IMR-90 (cell line): ENCODE measurements at regions of chr9 and their contacts with region 1.

Region 1: GRCh38 chr9:77149879-77150278 is 27.5 kb upstream of the VPS13A start:
- DNase-seq: no peak
- ATAC-seq: no peak
- H3K4me3 ChIP-seq: no peak overlapping the region
- H3K27ac ChIP-seq: no peak overlapping the region
- H3K4me1 ChIP-seq: no peaks in the 10 kb centered on the region
- H3K27me3 ChIP-seq: peaks cover 3% of the 10 kb centered on the region; the same call in 1 of the 2 replicates
- CTCF ChIP-seq: no peak
- POLR2A ChIP-seq: no peak
- RAD21 ChIP-seq: no peak

Region 2: DNA sequence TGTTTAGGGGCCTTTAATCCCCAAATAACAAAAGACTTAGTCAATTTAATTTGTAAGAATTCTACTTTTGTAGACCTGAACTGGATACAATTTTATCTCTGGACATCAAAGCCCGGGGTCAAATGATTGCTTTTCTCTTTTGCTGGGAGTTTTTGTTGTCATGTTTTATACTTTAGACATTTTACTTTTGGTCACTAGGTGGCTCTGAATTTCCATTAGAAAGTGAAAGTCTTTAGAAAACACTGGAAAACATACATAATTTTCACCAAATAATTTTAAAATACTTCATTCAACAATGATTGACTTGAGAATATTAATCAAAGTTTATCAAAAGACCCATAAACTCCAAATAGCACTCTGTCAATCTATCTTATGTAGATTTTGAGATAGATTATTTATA is 388.4 kb before region 1 on chr9:
- CTCF ChIA-PET with region 1: interaction called, 3 read pairs
- POLR2A ChIA-PET with region 1: no interaction called
- dilution Hi-C with region 1: no loop called
- in situ Hi-C with region 1: no loop called
- intact Hi-C with region 1: loop called (anchors 1 kb)
- DNase-seq: peak; percentile 7
- ATAC-seq: no peak; the same call in 1 of the 2 replicates
- H3K4me3 ChIP-seq: no peak overlapping the region
- H3K27ac ChIP-seq: no peak overlapping the region
- H3K4me1 ChIP-seq: no peaks in the 10 kb centered on the region
- H3K27me3 ChIP-seq: peaks cover 5% of the 10 kb centered on the region
- CTCF ChIP-seq: peak; percentile 50
- POLR2A ChIP-seq: no peak
- RAD21 ChIP-seq: peak; percentile 35

Region 3: GRCh38 chr9:77011973-77012821 is 137.7 kb before region 1 on chr9:
- CTCF ChIA-PET with region 1: no interaction called
- POLR2A ChIA-PET with region 1: no interaction called
- dilution Hi-C with region 1: no loop called
- in situ Hi-C with region 1: no loop called
- intact Hi-C with region 1: loop called (anchors 5 kb)
- DNase-seq: peak; percentile 29
- ATAC-seq: peak; percentile 85
- H3K4me3 ChIP-seq: no peak overlapping the region
- H3K27ac ChIP-seq: no peak overlapping the region
- H3K4me1 ChIP-seq: no peaks in the 10 kb centered on the region
- H3K27me3 ChIP-seq: peaks cover 59% of the 10 kb centered on the region
- CTCF ChIP-seq: peak; percentile 69
- POLR2A ChIP-seq: no peak
- RAD21 ChIP-seq: peak; percentile 57

Region 4: DNA sequence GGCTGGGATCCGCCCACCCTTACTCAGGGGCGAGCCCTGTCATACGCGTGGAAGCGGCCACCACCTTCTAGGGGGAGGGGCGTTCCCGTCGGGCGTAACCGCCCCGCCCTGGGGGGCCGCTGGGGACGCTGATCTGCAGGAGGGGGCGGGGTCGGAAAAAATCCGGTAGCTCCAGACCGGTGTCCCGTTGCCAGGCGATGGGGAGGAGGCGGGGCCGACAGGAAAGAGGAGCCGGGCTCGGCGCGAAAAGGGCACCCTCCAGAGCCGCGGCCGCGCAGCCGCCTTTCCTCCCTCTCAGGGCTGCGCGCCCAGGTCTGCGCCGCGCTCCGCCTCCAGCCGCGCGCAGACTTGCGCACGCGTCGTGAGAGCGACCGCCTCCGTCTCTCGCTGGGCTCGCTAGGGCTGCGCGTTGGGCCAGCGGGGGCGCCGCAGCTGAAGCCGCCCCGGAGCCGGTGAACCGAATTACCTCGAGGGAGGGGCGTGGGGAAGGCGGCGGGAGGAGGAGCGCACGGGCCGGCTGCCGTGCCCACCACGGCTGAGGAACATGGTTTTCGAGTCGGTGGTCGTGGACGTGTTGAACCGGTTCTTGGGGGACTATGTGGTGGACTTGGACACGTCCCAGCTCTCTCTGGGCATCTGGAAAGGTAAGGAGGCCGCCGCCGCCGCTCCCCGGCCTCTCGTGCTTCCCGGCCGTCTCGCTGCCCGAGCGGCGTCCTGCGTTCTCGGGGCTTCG is 27.4 kb after region 1 on chr9 and contains the start of gene VPS13A:
- CTCF ChIA-PET with region 1: no interaction called
- POLR2A ChIA-PET with region 1: no interaction called
- dilution Hi-C with region 1: no loop called
- in situ Hi-C with region 1: no loop called
- intact Hi-C with region 1: no loop called
- DNase-seq: peak; percentile 91
- ATAC-seq: peak; percentile 92
- H3K4me3 ChIP-seq: peak within 1 kb of the TSS; percentile 80
- H3K27ac ChIP-seq: peak within 1 kb of the TSS; percentile 43
- H3K4me1 ChIP-seq: 0 out of 2 replicates have a peak, but pooled peaks cover 1% of the 10 kb centered on the region
- H3K27me3 ChIP-seq: no peaks in the 10 kb centered on the region
- CTCF ChIP-seq: peak; percentile 34
- POLR2A ChIP-seq: no peak
- RAD21 ChIP-seq: no peak
- total RNA-seq, gene VPS13A: 26.5 and 46.9 TPM in 2 replicates

Region 5: DNA sequence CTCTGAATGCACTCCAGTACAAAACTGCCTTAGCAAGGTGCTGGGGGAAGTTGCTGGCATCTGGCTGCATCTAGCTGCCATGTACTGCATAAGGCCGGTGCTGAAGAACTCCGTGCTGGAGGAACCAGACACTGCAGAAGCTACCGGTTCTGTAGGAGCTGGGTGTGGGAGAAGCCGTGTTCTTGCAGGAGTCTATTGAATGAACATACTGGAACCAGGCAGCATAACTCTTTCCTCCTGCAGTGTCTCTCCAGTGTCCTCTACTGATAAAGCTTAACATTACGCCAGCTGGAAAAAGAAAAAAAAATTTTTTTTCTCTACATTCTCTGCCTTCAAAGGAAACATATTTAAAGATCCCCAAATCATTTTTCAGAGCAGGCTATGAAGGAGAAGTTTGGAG is 66.0 kb after region 1 on chr9:
- CTCF ChIA-PET with region 1: no interaction called
- POLR2A ChIA-PET with region 1: no interaction called
- dilution Hi-C with region 1: no loop called
- in situ Hi-C with region 1: no loop called
- intact Hi-C with region 1: no loop called
- DNase-seq: peak; percentile 55
- ATAC-seq: peak; percentile 66
- H3K4me3 ChIP-seq: no peak overlapping the region
- H3K27ac ChIP-seq: no peak overlapping the region
- H3K4me1 ChIP-seq: 0 out of 2 replicates have a peak, but pooled peaks cover 2% of the 10 kb centered on the region
- H3K27me3 ChIP-seq: no peaks in the 10 kb centered on the region
- CTCF ChIP-seq: peak; percentile 53
- POLR2A ChIP-seq: no peak
- RAD21 ChIP-seq: peak; percentile 55